ENCODE measurements at regions of chr5 and their contacts with region 1.

Region 1: DNA sequence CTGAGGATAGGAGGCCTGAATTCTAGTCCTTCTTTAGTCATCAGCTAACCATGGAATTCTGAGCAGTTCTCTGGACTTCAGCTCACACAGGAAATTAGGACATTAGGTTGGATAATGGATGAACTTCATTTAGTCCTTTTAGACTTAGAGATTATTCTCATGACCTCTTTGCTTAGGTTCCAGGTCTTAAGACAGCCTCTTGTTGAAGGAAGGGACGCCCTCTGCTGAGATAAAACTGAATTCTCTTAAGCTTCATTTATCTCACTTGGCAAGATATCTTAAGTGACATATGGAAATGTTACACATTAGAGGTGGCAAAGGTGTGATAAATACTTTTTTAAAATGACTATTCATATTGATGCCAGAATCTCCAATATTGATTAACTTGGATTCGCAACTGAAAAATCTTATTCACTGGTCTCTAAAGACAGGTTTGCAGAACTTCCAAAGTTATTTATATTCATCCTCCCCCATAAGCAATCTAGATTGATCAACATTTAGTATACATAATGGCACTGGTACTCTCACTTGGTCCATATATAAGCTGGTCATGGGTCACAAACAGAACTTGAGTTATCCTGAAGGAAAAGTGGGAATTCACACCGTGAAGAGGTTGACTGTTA is 16.9 kb upstream of the ZNF366 start:
- DNase-seq: no peak
- ATAC-seq: peak; percentile 81

Region 2: GRCh38 chr5:72366324-72366976 is 157.6 kb before region 1 on chr5:
- intact Hi-C with region 1: loop called (anchors 2 kb)
- DNase-seq: peak; percentile 54
- ATAC-seq: peak; percentile 93

Measured in Right ventricle myocardium superior (tissue), 1 donor.